OCI-LY7 (cell line): ENCODE measurements at regions of chr15 and their contacts with region 1.

Region 1: GRCh38 chr15:69452692-69453521 is at the start of gene RPLP1:
- DNase-seq: peak; percentile 98
- H3K4me3 ChIP-seq: peak within 1 kb of the TSS; percentile 94
- H3K27ac ChIP-seq: peak within 1 kb of the TSS; percentile 92
- H3K4me1 ChIP-seq: peaks cover 27% of the 10 kb centered on the region
- CTCF ChIP-seq: no peak
- total RNA-seq, gene RPLP1: 469 and 889 TPM in 2 replicates

Region 2: GRCh38 chr15:69064649-69065048 is 388.3 kb before region 1 on chr15:
- CTCF ChIA-PET with region 1: no interaction called
- POLR2A ChIA-PET with region 1: no interaction called
- intact Hi-C with region 1: no loop called
- DNase-seq: no peak
- H3K4me3 ChIP-seq: no peak overlapping the region
- H3K27ac ChIP-seq: no peak overlapping the region
- H3K4me1 ChIP-seq: peaks cover 21% of the 10 kb centered on the region
- CTCF ChIP-seq: peak; percentile 33; the same call in 1 of the 2 replicates

Region 3: GRCh38 chr15:69160141-69160993 is 292.5 kb before region 1 on chr15 and contains the start of gene GLCE:
- CTCF ChIA-PET with region 1: no interaction called
- POLR2A ChIA-PET with region 1: no interaction called
- intact Hi-C with region 1: loop called (anchors 2 kb)
- DNase-seq: peak; percentile 95
- H3K4me3 ChIP-seq: peak within 1 kb of the TSS; percentile 81
- H3K27ac ChIP-seq: no peak within 1 kb of the TSS
- H3K4me1 ChIP-seq: peaks cover 10% of the 10 kb centered on the region
- CTCF ChIP-seq: no peak
- total RNA-seq, gene GLCE: 7.1 and 7.3 TPM in 2 replicates

Region 4: DNA sequence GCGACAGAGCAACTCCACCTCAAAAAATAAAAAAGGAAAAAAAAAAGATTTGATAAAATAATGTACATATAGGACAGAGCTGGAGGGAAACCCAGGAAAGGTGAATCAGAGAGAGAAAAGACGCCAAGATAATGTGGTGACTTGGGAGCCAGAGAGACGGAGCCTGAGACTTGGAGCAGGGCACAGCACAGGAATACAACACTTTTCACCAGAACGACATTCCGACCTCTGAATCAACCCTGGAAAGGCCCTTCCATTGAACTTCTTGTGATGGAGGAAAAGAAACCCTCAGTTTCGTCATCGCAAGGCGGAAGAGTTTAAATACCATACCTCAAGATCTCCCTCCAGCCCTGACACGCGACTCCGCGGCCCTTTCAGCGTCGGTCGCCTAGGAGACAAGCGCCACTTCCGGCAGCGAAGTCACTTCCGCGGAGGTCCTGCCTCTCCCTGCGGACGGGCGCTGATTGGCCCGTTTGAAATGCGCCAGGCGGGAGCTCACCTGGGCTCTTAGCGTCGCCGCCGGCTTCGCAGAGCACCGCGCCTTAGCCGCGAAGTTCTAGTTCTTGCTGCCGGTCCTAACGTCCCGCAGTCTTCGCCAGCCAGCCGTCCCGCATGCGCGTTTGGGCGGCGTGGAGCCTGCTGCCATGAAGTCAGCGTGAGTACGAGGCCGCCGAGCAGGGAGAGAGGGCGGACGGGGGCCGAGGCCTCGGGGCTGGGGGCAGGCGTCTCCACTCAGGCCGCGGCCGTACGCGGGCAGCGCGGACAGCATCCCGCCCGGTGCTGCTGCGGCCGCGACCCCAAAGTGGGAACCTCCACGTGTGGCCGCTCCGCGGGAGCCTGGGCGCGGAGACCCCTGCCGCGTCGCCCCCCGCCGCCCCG is 38.8 kb before region 1 on chr15 and contains the start of gene KIF23:
- CTCF ChIA-PET with region 1: no interaction called
- POLR2A ChIA-PET with region 1: interaction called, 39 read pairs
- intact Hi-C with region 1: loop called (anchors 1 kb)
- DNase-seq: peak; percentile 95
- H3K4me3 ChIP-seq: peak within 1 kb of the TSS; percentile 99
- H3K27ac ChIP-seq: peak within 1 kb of the TSS; percentile 64
- H3K4me1 ChIP-seq: peaks cover 12% of the 10 kb centered on the region
- CTCF ChIP-seq: no peak
- total RNA-seq, gene KIF23: 54.0 and 66.1 TPM in 2 replicates

Region 5: DNA sequence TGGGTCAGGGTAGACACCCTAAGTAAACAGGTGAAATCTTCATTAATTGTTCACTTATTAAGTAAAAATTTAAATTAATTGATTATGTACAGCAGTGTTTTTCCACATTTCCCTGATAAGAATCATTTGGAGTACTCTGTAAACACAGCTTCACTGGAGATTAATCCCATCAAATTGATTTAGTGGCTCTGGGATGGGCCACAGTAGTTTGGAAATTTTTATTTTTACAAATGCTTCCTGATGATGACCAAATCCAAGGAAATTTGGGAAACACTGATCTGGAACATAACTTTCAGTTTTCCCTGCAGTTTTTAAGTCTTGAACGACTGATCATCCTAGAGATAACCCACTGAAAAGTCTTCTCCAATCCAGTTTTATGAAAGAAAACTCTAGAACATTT is 19.1 kb before region 1 on chr15:
- CTCF ChIA-PET with region 1: no interaction called
- POLR2A ChIA-PET with region 1: interaction called, 16 read pairs
- intact Hi-C with region 1: no loop called
- DNase-seq: no peak
- H3K4me3 ChIP-seq: no peak overlapping the region
- H3K27ac ChIP-seq: no peak overlapping the region
- H3K4me1 ChIP-seq: no peaks in the 10 kb centered on the region
- CTCF ChIP-seq: no peak

Region 6: DNA sequence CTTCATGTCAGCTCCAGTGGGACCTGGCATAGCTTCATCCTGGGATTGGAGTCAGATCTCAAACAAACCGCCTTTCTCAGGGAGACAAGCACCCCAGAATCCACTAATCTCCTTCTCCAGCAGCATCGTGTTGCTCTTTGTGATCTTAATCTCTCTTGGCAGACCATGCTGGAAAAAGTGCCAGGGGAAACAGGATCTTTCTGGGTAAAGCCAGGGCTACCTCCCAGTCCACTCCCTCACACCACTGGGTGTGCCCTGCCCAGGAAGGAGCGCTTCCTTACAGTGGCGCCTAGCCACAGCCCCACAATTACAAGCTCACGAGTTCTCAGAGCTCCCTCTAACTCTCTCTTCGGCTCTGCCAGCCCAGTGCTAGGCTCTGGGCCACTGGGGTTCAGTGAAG is 31.9 kb after region 1 on chr15:
- CTCF ChIA-PET with region 1: no interaction called
- POLR2A ChIA-PET with region 1: no interaction called
- intact Hi-C with region 1: no loop called
- DNase-seq: no peak
- H3K4me3 ChIP-seq: no peak overlapping the region
- H3K27ac ChIP-seq: no peak overlapping the region
- H3K4me1 ChIP-seq: no peaks in the 10 kb centered on the region
- CTCF ChIP-seq: no peak

Region 7: GRCh38 chr15:69502470-69503045 is 49.7 kb after region 1 on chr15:
- CTCF ChIA-PET with region 1: no interaction called
- POLR2A ChIA-PET with region 1: no interaction called
- intact Hi-C with region 1: no loop called
- DNase-seq: no peak
- H3K4me3 ChIP-seq: no peak overlapping the region
- H3K27ac ChIP-seq: no peak overlapping the region
- H3K4me1 ChIP-seq: no peaks in the 10 kb centered on the region
- CTCF ChIP-seq: peak; percentile 60

Region 8: GRCh38 chr15:69513450-69513960 is 60.6 kb after region 1 on chr15:
- CTCF ChIA-PET with region 1: no interaction called
- POLR2A ChIA-PET with region 1: no interaction called
- intact Hi-C with region 1: no loop called
- DNase-seq: no peak
- H3K4me3 ChIP-seq: no peak overlapping the region
- H3K27ac ChIP-seq: no peak overlapping the region
- H3K4me1 ChIP-seq: no peaks in the 10 kb centered on the region
- CTCF ChIP-seq: no peak